Dendritic cell treated with granulocyte-macrophage colony-stimulating factor and Interleukin-4, amounts not matched to agents 40 ng/mL and 50 ng/mL, for 4 days (primary cell): ENCODE measurements at regions of chr3 and their contacts with region 1.

Region 1: GRCh38 chr3:58497097-58497496 is 5.2 kb downstream of the KCTD6 start:
- H3K4me3 Mint-ChIP-seq: no peak overlapping the region
- H3K27ac Mint-ChIP-seq: no peak overlapping the region
- H3K4me1 Mint-ChIP-seq: peaks cover 58% of the 10 kb centered on the region
- H3K27me3 Mint-ChIP-seq: no peaks in the 10 kb centered on the region

Region 2: GRCh38 chr3:58433400-58434169 is 63.5 kb before region 1 on chr3 and contains the start of gene PDHB:
- intact Hi-C with region 1: no loop called
- H3K4me3 Mint-ChIP-seq: peak within 1 kb of the TSS; percentile 83
- H3K27ac Mint-ChIP-seq: peak within 1 kb of the TSS; percentile 95
- H3K4me1 Mint-ChIP-seq: peaks cover 35% of the 10 kb centered on the region
- H3K27me3 Mint-ChIP-seq: no peaks in the 10 kb centered on the region

Region 3: GRCh38 chr3:58463181-58463941 is 33.7 kb before region 1 on chr3:
- intact Hi-C with region 1: loop called (anchors 5 kb)
- H3K4me3 Mint-ChIP-seq: peak overlapping the region; percentile 32
- H3K27ac Mint-ChIP-seq: no peak overlapping the region
- H3K4me1 Mint-ChIP-seq: peaks cover 11% of the 10 kb centered on the region
- H3K27me3 Mint-ChIP-seq: no peaks in the 10 kb centered on the region

Region 4: DNA sequence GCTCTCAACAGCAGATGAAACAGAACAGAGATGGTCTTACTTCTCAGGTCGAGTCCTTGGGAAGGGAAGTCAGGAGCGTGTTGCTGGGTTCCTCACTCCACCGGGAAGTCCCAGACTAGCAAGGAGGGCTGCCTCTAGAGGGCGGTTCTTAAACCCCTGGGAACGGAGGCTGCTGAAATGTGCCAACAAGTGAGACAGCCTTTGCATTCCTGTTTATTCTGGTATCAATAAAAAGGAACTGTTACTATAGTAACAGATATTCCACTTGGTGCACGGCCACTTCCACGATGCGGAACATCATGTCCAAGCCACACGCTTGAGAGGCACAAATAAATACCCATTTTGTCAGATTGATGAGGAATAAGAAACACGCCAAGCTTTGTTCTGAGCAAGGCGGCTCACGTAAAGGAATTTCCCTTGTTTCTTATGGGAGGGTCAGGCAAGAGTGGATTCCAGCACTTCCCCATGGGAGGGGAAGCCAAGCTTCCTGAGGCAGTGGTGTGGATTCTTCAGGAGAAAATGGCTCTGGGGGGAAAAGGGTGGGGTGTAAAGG is 80.2 kb after region 1 on chr3 and contains the start of gene FAM107A:
- intact Hi-C with region 1: no loop called
- H3K4me3 Mint-ChIP-seq: no peak within 1 kb of the TSS
- H3K27ac Mint-ChIP-seq: no peak within 1 kb of the TSS
- H3K4me1 Mint-ChIP-seq: no peaks in the 10 kb centered on the region
- H3K27me3 Mint-ChIP-seq: peaks cover 17% of the 10 kb centered on the region